Ovary (tissue), 10 donors: ENCODE measurements at regions of chr12 and their contacts with region 1.

Region 1: GRCh38 chr12:91172096-91172495 is 10.5 kb downstream of the DCN start:
- DNase-seq: no peak
- H3K4me3 ChIP-seq: peak overlapping the region; percentile 50
- H3K27ac ChIP-seq: peak overlapping the region in 1 of 2 donors; percentile 89
- H3K4me1 ChIP-seq: peaks cover 10% of the 10 kb centered on the region
- H3K27me3 ChIP-seq: no peaks in the 10 kb centered on the region
- CTCF ChIP-seq: no peak
- EP300 ChIP-seq: no peak
- POLR2A ChIP-seq: no peak

Region 2: DNA sequence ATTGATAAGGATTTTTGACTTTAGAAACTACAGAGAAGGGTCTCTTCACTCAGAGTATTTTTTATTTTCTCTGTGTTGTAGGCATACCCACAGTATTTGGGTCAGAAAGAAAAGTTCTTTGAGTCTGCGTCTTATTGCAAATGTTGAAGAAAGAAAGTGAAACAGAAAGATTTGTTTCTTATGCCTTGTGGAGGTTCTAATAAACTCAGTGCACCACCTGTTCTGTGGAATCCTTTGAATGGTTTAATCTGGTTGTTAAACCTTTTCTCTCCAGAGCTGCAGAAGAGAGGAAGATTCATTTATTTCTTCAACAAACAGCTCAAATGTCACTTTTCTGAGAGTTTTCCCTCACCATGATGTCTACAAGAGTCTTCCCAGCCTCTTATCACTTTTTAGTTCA is 1384.0 kb after region 1 on chr12:
- intact Hi-C with region 1: loop called in 1 of 4 experiments (anchors 5 kb)
- DNase-seq: no peak
- H3K4me3 ChIP-seq: no peak overlapping the region
- H3K27ac ChIP-seq: no peak overlapping the region
- H3K4me1 ChIP-seq: peaks cover 2% of the 10 kb centered on the region
- H3K27me3 ChIP-seq: no peaks in the 10 kb centered on the region
- CTCF ChIP-seq: no peak
- EP300 ChIP-seq: no peak
- POLR2A ChIP-seq: no peak